ENCODE measurements at regions of chr12 and their contacts with region 1.

Region 1: GRCh38 chr12:21657326-21658077 is at the start of gene LDHB:
- DNase-seq: peak; percentile 82 to 96 (median 90)
- ATAC-seq: peak; percentile 93 to 94
- H3K4me3 Mint-ChIP-seq: peak within 1 kb of the TSS; percentile 89 to 100 (median 99)
- H3K27ac Mint-ChIP-seq: peak within 1 kb of the TSS; percentile 94 to 99 (median 98)
- H3K4me1 Mint-ChIP-seq: peaks cover 29 to 61% (median 56%) of the 10 kb centered on the region in 4 donors
- H3K27me3 Mint-ChIP-seq: no peaks in the 10 kb centered on the region
- polyA plus RNA-seq, gene LDHB: 1,691 to 2,368 (median 2,237) TPM

Region 2: GRCh38 chr12:21542403-21542802 is 115.1 kb before region 1 on chr12:
- POLR2A ChIA-PET with region 1: no interaction called
- DNase-seq: no peak
- ATAC-seq: no peak
- H3K4me3 Mint-ChIP-seq: no peak overlapping the region
- H3K27ac Mint-ChIP-seq: no peak overlapping the region
- H3K4me1 Mint-ChIP-seq: peaks cover 0 to 2% (median 0%) of the 10 kb centered on the region in 4 donors
- H3K27me3 Mint-ChIP-seq: peaks cover 0 to 16% (median 1%) of the 10 kb centered on the region in 5 donors

Region 3: GRCh38 chr12:21607701-21608100 is 49.8 kb before region 1 on chr12:
- POLR2A ChIA-PET with region 1: interaction called, 47 read pairs
- DNase-seq: peak in 3 of 10 donors; percentile 36 to 45 (median 40)
- ATAC-seq: peak in 1 of 2 donors; percentile 73
- H3K4me3 Mint-ChIP-seq: no peak overlapping the region
- H3K27ac Mint-ChIP-seq: no peak overlapping the region
- H3K4me1 Mint-ChIP-seq: peaks cover 2 to 8% (median 6%) of the 10 kb centered on the region in 4 donors
- H3K27me3 Mint-ChIP-seq: peaks cover 0 to 1% (median 0%) of the 10 kb centered on the region in 5 donors

Region 4: GRCh38 chr12:21634245-21634644 is 23.3 kb before region 1 on chr12:
- POLR2A ChIA-PET with region 1: interaction called, 16 read pairs
- DNase-seq: no peak
- ATAC-seq: no peak
- H3K4me3 Mint-ChIP-seq: no peak overlapping the region
- H3K27ac Mint-ChIP-seq: peak overlapping the region in 7 of 10 donors; percentile 20 to 59 (median 40)
- H3K4me1 Mint-ChIP-seq: peaks cover 10 to 32% (median 23%) of the 10 kb centered on the region in 4 donors
- H3K27me3 Mint-ChIP-seq: no peaks in the 10 kb centered on the region

Region 5: GRCh38 chr12:21672136-21672535 is 14.6 kb after region 1 on chr12:
- POLR2A ChIA-PET with region 1: interaction called, 174 read pairs
- DNase-seq: no peak
- ATAC-seq: no peak
- H3K4me3 Mint-ChIP-seq: no peak overlapping the region
- H3K27ac Mint-ChIP-seq: peak overlapping the region in 1 of 10 donors; percentile 56
- H3K4me1 Mint-ChIP-seq: peaks cover 19 to 26% (median 23%) of the 10 kb centered on the region in 4 donors
- H3K27me3 Mint-ChIP-seq: peaks cover 0 to 1% (median 0%) of the 10 kb centered on the region in 5 donors

Region 6: GRCh38 chr12:21683115-21683514 is 25.6 kb after region 1 on chr12:
- POLR2A ChIA-PET with region 1: interaction called, 174 read pairs
- DNase-seq: no peak
- ATAC-seq: no peak
- H3K4me3 Mint-ChIP-seq: no peak overlapping the region
- H3K27ac Mint-ChIP-seq: no peak overlapping the region
- H3K4me1 Mint-ChIP-seq: peaks cover 13 to 23% (median 19%) of the 10 kb centered on the region in 4 donors
- H3K27me3 Mint-ChIP-seq: no peaks in the 10 kb centered on the region